Activated CD4-positive, alpha-beta T cell treated with anti-CD3 and anti-CD28 coated beads, Interleukin-2, amount 10 ng/mL, durations not matched to agents 24 days and 14 days (primary cell): ENCODE measurements at regions of chr1 and their contacts with region 1.

Region 1: DNA sequence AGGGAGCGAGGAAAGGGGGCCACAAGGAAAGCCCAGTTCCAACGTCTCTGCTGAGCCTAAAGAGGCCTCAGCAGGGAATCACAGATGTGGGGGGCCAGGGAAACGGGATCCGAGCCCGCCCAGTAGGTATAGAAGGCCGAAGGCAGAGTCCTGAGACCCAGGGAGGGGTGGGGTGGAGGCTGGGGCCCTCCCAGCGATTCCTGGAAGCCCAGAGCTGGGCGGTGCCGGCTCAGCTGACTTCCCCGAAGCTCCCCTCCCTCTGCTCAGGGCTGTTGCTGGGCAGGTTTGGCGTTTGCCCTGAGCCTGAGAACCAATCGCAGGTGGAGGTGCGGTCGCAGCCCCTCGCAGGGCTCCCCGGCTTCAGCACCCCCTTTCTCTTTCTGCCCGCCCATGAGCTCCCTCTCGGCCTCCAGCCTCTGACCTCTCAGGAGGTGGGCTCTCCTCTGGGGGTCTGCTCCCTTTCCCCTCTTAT is 12.8 kb downstream of the ADAMTSL4 start:
- DNase-seq: peak; percentile 98
- H3K4me3 Mint-ChIP-seq: peak overlapping the region; percentile 95
- H3K27ac Mint-ChIP-seq: peak overlapping the region; percentile 100
- H3K4me1 Mint-ChIP-seq: peaks cover 55% of the 10 kb centered on the region
- H3K27me3 Mint-ChIP-seq: no peaks in the 10 kb centered on the region

Region 2: DNA sequence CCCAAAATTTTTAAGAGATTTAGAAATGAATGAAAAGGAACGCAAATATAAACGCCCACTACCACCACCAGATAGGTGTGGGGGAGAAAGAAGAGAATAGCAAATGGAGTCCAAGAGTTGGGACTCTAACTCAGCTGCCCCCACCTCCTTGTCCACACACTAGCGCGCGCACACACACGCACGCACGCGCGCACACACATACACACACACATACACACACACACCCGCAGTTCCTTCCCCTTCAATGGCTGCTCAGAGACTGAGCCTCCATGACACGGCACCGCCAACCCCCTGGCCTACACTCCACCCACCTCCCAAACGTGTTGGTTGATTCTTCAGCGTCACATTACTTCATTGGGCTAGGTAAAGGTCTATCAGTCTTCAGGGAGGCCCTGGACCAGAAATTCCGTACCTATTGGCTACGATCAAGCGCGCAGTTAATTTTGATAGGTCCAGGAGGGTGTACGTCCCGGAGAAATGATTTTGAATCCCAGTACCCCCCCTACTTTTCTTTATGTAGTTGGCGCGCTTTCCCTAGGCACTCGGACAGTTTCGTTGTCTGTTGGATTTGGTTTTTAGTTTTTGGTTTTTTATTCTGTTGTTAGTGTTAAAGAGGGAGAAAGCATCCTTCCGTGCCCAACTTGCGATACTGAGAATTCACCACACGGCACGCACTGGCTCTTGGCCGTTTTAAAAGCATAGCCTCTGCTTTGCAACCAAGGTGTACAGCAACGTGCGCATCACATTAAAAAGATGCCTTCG is 326.0 kb before region 1 on chr1 and contains the start of gene ANP32E:
- intact Hi-C with region 1: loop called (anchors 10 kb)
- DNase-seq: peak; percentile 98
- H3K4me3 Mint-ChIP-seq: no peak within 1 kb of the TSS
- H3K27ac Mint-ChIP-seq: no peak within 1 kb of the TSS
- H3K4me1 Mint-ChIP-seq: peaks cover 16% of the 10 kb centered on the region
- H3K27me3 Mint-ChIP-seq: peaks cover 6% of the 10 kb centered on the region
- total RNA-seq, gene ANP32E: 193 and 201 TPM in 2 replicates

Region 3: GRCh38 chr1:150578965-150579798 is 17.2 kb after region 1 on chr1 and contains the start of gene MCL1:
- intact Hi-C with region 1: loop called (anchors 1 kb)
- DNase-seq: peak; percentile 98
- H3K4me3 Mint-ChIP-seq: peak within 1 kb of the TSS; percentile 94
- H3K27ac Mint-ChIP-seq: peak within 1 kb of the TSS; percentile 93
- H3K4me1 Mint-ChIP-seq: peaks cover 26% of the 10 kb centered on the region
- H3K27me3 Mint-ChIP-seq: no peaks in the 10 kb centered on the region
- total RNA-seq, gene MCL1: 278 and 280 TPM in 2 replicates

Region 4: DNA sequence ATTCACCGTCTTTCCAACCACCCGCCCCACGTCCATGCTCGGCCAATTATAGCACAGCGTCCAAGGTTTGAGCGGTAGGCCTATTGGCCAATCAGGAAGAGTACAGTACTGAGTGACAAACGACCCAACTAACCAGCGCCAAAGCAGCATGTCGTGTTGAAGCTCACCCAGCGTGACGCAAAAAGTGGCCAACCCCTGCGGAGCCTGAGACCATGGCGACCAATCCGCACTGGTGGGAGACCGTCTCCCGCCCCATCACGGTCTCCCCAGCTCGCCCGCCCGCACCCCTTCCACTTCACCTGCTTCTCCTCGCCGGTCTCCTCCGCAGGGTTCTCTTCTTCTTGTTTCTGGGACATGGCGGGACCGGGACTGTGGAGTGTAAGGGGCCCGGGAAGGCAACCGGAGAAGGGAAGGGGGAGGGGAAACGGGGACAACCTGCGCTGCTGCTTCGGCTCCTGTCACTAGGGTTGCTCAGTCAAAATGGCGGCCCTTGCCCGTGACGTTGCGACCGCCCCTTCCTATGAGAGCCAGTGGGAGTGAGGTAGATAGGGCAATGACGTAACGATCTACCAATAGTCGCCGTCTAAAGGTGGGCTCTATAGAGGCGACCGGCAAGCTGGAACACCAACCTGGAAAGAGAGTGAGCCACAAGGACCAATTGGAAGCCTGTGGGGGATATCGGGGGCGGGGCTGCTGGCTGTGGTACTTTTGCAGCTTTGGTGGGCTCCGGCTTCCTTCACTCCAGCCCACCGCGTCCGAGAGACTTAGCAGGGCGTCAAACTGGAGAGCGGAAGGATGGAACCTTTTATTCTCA is 67.3 kb after region 1 on chr1 and contains the start of gene ENSA:
- intact Hi-C with region 1: loop called (anchors 1 kb)
- DNase-seq: peak; percentile 98
- H3K4me3 Mint-ChIP-seq: no peak within 1 kb of the TSS
- H3K27ac Mint-ChIP-seq: no peak within 1 kb of the TSS
- H3K4me1 Mint-ChIP-seq: peaks cover 26% of the 10 kb centered on the region
- H3K27me3 Mint-ChIP-seq: no peaks in the 10 kb centered on the region
- total RNA-seq, gene ENSA: 244 and 248 TPM in 2 replicates

Region 5: DNA sequence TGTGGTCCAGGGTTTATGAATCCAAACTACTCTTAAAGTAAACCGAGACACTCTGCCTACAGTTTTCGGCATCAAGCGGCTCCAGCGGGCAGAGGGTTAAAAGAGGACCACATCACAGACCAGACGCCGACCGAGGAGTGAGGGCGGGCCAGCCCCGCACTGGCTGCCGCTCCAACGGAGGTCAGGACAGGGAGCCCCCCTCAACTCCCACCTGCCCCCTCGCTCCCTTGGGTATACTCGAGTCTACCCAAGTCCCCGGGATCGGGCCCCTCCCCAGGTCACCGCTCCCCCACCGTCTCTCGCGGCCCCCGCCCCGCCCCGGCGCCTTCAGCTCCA is 314.1 kb after region 1 on chr1:
- intact Hi-C with region 1: loop called (anchors 5 kb)
- DNase-seq: no peak
- H3K4me3 Mint-ChIP-seq: peak overlapping the region; percentile 96
- H3K27ac Mint-ChIP-seq: peak overlapping the region; percentile 94
- H3K4me1 Mint-ChIP-seq: peaks cover 25% of the 10 kb centered on the region
- H3K27me3 Mint-ChIP-seq: no peaks in the 10 kb centered on the region

Region 6: DNA sequence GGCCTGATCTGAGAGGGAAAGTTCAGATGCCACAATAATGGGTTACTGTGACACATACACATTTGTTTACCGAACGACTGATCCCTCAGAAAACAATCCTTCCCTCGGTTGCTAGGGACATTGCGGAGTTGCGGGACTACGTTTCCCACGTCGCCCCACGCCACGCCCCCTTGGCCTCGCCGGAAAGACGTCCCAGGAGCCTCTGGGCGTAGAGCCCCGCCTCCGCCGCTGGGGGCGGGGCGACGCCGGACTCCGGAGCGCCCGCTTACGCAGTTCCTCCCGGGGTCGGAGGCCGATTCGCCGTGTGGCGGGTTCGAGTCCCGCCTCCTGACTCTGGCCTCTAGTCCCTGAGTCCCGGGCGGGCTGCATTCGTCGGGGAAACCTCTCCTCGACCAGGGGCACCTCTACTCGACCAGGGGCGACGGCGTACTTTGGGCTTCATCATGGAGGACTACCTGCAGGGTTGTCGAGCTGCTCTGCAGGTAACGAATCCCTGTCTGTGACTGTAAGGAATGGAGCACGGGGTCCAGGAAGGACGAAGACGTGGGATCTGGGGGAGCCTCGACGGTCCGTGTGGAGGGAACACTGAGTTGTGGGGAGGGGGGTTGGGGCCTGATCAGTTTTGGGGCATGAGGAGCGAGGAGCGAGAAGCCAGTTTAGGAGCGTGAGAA is 446.3 kb after region 1 on chr1 and contains the start of gene PRUNE1:
- intact Hi-C with region 1: loop called (anchors 5 kb)
- DNase-seq: peak; percentile 98
- H3K4me3 Mint-ChIP-seq: peak within 1 kb of the TSS; percentile 100
- H3K27ac Mint-ChIP-seq: peak within 1 kb of the TSS; percentile 90
- H3K4me1 Mint-ChIP-seq: peaks cover 58% of the 10 kb centered on the region
- H3K27me3 Mint-ChIP-seq: no peaks in the 10 kb centered on the region
- total RNA-seq, gene PRUNE1: 13.3 and 15.2 TPM in 2 replicates